ENCODE measurements at regions of chr22 and their contacts with region 1.

Region 1: DNA sequence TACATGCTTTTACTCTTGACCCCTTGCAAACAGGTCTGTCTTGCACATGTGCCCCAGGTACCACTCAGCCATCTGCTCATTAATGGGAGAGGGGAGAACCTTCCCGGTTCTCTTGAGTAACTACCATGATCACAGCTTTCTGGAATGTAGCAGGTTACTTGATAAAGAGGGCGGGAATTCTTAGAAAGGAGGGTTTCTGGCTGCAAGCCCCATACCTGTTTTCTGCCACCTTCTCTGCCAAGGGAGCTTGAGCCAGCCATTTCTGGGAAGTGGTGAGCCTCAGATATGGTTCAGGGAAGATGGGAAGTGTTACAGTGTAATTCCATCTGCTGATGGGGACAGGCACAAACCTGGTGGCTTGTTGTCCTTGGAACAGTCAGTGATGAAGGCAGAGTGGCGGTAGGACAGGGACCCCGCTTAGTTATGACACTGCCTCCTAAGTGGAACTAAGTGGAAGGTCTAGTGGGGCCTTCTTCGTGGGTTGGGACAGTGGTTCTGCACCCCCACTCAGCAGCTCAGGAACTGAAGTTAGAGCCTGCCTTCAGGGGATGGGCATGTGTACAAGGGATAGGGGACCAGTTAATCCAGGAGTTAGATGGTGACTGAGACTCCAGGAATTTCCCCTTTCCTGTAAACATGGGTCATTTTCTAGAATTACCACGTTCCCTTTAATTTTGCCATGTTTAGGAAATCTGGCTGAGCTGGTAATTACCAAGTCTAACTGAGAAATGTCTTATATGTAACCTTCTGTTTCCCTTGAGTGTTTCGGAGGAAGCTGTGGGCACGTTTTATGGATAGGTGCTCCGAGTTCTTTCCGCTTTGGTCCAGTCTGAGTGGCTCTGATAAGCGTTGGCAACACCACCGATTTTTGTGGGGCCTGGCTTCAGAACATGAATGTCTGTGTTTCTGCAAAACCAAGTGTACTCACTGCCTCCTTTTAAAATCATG is 35.3 kb downstream of the BCR start:
- DNase-seq: no peak
- H3K4me3 Mint-ChIP-seq: peak overlapping the region; percentile 56
- H3K27ac Mint-ChIP-seq: peak overlapping the region; percentile 85
- H3K4me1 Mint-ChIP-seq: peaks cover 73% of the 10 kb centered on the region
- H3K27me3 Mint-ChIP-seq: no peaks in the 10 kb centered on the region

Region 2: DNA sequence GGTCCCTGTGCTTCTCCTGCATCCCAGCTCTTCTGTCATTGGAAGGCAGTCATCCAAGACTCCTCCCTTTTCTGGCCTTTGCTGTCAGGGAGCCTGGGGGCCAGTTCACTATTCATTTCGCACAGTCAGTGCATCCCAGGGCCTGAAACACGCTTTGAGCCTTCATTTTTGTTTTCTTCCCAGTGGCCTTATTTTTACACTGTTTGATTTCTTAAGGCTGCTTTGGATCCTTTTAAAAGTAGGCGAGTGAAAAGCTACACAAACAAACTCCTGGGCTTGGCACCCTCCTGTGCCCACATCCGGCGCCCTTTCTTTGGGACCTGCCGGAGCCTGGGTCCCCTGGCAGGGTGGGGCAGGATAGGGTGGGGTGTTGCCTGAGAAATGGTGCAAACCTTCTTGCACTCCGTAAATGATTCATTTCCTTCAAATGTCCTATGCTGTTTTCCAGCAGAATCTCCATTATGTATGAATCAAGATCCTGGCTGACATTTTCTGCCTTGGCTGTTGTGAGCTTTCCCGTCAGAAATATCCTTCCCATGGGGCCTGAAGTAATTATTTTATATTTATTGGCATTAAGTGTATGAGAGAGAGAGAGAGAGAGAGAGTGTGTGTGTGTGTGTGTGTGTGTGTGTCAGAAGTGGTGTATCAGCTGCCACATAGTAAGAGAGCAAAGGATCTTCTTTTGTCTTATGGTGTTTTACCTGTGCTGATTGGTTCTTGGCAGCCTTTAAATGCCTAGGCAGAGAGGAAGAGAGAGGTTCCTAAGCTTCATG is 10.3 kb after region 1 on chr22:
- CTCF ChIA-PET with region 1: interaction called, 3 read pairs
- POLR2A ChIA-PET with region 1: interaction called, 14 read pairs
- DNase-seq: peak; percentile 70
- H3K4me3 Mint-ChIP-seq: peak overlapping the region; percentile 43
- H3K27ac Mint-ChIP-seq: peak overlapping the region; percentile 89
- H3K4me1 Mint-ChIP-seq: peaks cover 76% of the 10 kb centered on the region
- H3K27me3 Mint-ChIP-seq: no peaks in the 10 kb centered on the region

Measured in activated CD4-positive, alpha-beta memory T cell treated with anti-CD3 and anti-CD28 coated beads, Interleukin-2, amount 10 ng/mL, durations not matched to agents 7 days and 5 days (primary cell).